ENCODE measurements at regions of chr5 and their contacts with region 1.

Region 1: DNA sequence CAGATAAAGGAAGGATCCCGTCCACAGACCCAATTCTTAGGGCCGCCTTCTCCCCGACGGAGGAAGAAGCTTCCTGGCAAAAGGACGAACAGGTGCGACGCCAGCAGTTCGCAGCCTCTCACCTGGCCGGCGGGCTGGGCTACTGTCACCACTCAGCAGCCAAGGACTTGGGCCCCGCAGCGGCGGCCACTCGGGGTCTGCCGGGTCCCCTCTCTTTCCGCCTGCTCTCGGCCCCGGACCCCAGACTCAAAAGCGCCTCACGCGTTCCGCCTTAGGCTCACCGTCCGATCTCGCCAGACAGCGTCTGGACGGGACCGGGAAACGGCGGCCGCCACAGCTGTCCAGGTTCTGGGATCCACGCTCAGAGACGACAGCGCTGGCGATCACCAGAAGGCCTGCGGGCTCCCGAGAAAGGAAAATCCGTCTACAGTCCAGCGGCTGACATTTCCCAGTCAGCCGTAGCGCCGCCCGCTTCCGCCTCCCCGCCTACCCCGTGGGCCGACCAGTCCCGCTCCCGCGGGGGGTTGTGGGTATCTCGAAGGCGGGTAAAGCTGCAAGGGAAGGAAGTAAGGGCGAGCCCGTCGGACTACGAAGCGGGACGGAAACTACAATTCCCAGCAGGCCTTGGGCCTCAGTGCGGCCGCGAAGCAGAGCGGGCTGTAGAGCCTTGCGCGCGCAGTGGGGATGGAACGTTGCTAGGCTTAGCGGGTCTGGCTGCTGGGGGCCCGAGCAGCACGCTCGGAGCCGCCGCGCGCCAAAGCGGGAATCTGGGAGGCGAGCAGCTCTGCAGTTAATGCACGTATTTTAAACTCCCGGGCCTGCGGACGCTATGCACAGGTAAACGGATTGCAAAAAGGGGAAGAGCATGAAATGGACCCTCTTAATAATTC is at the starts of genes LMBRD2 and SKP2:
- DNase-seq: peak; percentile 88 to 99 (median 96)
- ATAC-seq: peak; percentile 100
- H3K4me3 ChIP-seq: peak within 1 kb of the TSS; percentile 87
- H3K4me3 Mint-ChIP-seq: peak within 1 kb of the TSS; percentile 89 to 98 (median 96)
- H3K27ac ChIP-seq: peak within 1 kb of the TSS; percentile 85
- H3K27ac Mint-ChIP-seq: peak within 1 kb of the TSS; percentile 76 to 97 (median 91)
- H3K4me1 ChIP-seq: peaks cover 24% of the 10 kb centered on the region in 2 donors
- H3K4me1 Mint-ChIP-seq: peaks cover 48 to 92% (median 77%) of the 10 kb centered on the region in 7 donors
- H3K27me3 ChIP-seq: no peaks in the 10 kb centered on the region
- H3K27me3 Mint-ChIP-seq: no peaks in the 10 kb centered on the region
- total RNA-seq, gene LMBRD2: 6.8 to 17.1 (median 12.3) TPM
- total RNA-seq, gene SKP2: 11.9 to 37.1 (median 23.3) TPM

Region 2: GRCh38 chr5:34838785-34839714 is 1312.6 kb before region 1 on chr5 and contains the start of gene TTC23L:
- CTCF ChIA-PET with region 1: no interaction called
- POLR2A ChIA-PET with region 1: no interaction called
- intact Hi-C with region 1: loop called (anchors 1 to 5 kb)
- DNase-seq: peak; percentile 82 to 95 (median 90)
- ATAC-seq: peak; percentile 94
- H3K4me3 ChIP-seq: peak within 1 kb of the TSS; percentile 85
- H3K4me3 Mint-ChIP-seq: peak within 1 kb of the TSS; percentile 79 to 97 (median 92)
- H3K27ac ChIP-seq: peak within 1 kb of the TSS; percentile 78
- H3K27ac Mint-ChIP-seq: peak within 1 kb of the TSS; percentile 83 to 99 (median 94)
- H3K4me1 ChIP-seq: peaks cover 0 to 4% of the 10 kb centered on the region in 2 donors
- H3K4me1 Mint-ChIP-seq: peaks cover 6 to 16% (median 10%) of the 10 kb centered on the region in 7 donors
- H3K27me3 ChIP-seq: no peaks in the 10 kb centered on the region
- H3K27me3 Mint-ChIP-seq: peaks cover 0 to 9% (median 0%) of the 10 kb centered on the region in 5 donors
- total RNA-seq, gene TTC23L: 0.57 to 1.9 (median 1.00) TPM in 3 of 5 experiments, not detected in the others

Region 3: DNA sequence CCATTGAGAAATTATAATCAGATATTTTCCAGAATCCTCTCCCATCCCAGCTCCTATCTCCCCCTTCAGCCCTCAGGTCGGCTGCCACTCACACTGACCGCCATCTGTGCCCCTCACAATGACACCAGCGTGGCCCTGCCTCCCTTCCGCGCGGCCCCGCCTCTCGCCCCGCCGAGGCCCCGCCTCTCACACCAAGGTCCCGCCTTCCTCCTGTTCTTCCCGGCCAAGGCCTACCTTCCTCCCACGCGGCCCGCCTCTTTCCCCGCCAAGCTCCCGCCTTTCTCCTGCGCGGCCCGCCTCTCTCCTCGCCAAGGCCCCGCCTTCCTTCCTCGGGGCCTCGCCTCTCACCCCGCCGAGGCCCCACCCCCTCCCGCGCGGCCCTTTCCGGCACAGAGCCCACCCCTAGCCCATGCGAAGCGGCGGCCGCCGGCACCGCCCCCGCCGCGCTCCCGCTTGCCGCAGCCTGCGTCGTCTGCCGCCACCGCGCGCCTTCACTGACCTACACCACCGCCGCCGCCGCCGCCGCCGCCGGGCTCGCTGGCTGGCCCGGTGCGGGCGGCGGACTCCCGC is 1222.4 kb before region 1 on chr5 and contains the start of gene DNAJC21:
- CTCF ChIA-PET with region 1: no interaction called
- POLR2A ChIA-PET with region 1: no interaction called
- intact Hi-C with region 1: loop called (anchors 1 kb)
- DNase-seq: peak; percentile 93 to 99 (median 97)
- ATAC-seq: peak; percentile 93
- H3K4me3 ChIP-seq: peak within 1 kb of the TSS; percentile 75
- H3K4me3 Mint-ChIP-seq: peak within 1 kb of the TSS; percentile 94 to 99 (median 96)
- H3K27ac ChIP-seq: peak within 1 kb of the TSS; percentile 93
- H3K27ac Mint-ChIP-seq: peak within 1 kb of the TSS; percentile 86 to 98 (median 94)
- H3K4me1 ChIP-seq: peaks cover 15 to 18% of the 10 kb centered on the region in 2 donors
- H3K4me1 Mint-ChIP-seq: peaks cover 19 to 44% (median 36%) of the 10 kb centered on the region in 7 donors
- H3K27me3 ChIP-seq: no peaks in the 10 kb centered on the region
- H3K27me3 Mint-ChIP-seq: no peaks in the 10 kb centered on the region
- total RNA-seq, gene DNAJC21: 43.9 to 66.4 (median 49.6) TPM

Region 4: DNA sequence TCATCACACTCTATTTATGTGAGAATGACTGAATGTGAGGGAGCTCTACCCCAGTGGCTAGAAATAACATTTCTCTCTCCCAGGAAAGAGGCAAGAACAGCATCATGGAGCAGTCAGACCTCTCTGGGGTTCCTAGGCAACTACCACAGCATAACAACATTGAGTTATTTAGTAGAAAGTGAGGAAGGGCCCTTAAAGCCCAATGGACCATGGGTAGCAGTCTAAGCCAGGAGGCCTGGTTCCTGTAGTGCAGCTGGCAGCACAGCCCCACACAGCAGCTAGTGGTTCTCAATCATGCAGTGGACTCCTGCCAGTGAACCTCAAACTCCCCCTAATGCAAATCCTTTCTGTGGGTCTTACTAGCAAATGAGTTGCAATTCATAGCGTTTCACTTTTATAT is 478.7 kb before region 1 on chr5:
- CTCF ChIA-PET with region 1: no interaction called
- POLR2A ChIA-PET with region 1: no interaction called
- intact Hi-C with region 1: loop called in 1 of 2 experiments (anchors 5 kb)
- DNase-seq: peak in 8 of 9 donors; percentile 30 to 68 (median 52)
- ATAC-seq: peak; percentile 88
- H3K4me3 ChIP-seq: peak overlapping the region; percentile 14
- H3K4me3 Mint-ChIP-seq: peak overlapping the region in 9 of 10 donors; percentile 47 to 81 (median 66)
- H3K27ac ChIP-seq: peak overlapping the region; percentile 62
- H3K27ac Mint-ChIP-seq: peak overlapping the region; percentile 87 to 96 (median 92)
- H3K4me1 ChIP-seq: peaks cover 36 to 41% of the 10 kb centered on the region in 2 donors
- H3K4me1 Mint-ChIP-seq: peaks cover 20 to 88% (median 75%) of the 10 kb centered on the region in 7 donors
- H3K27me3 ChIP-seq: no peaks in the 10 kb centered on the region
- H3K27me3 Mint-ChIP-seq: no peaks in the 10 kb centered on the region

Region 5: GRCh38 chr5:36079200-36079761 is 72.4 kb before region 1 on chr5:
- CTCF ChIA-PET with region 1: no interaction called
- POLR2A ChIA-PET with region 1: no interaction called
- intact Hi-C with region 1: loop called in 1 of 2 experiments (anchors 1 kb)
- DNase-seq: peak in 6 of 9 donors; percentile 14 to 36 (median 29)
- ATAC-seq: peak; percentile 82
- H3K4me3 ChIP-seq: no peak overlapping the region
- H3K4me3 Mint-ChIP-seq: no peak overlapping the region
- H3K27ac ChIP-seq: no peak overlapping the region
- H3K27ac Mint-ChIP-seq: no peak overlapping the region
- H3K4me1 ChIP-seq: no peaks in the 10 kb centered on the region
- H3K4me1 Mint-ChIP-seq: no peaks in the 10 kb centered on the region
- H3K27me3 ChIP-seq: no peaks in the 10 kb centered on the region
- H3K27me3 Mint-ChIP-seq: peaks cover 17 to 51% (median 27%) of the 10 kb centered on the region in 5 donors

Region 6: GRCh38 chr5:36241631-36242533 is 90.2 kb after region 1 on chr5 and contains the start of gene NADK2:
- CTCF ChIA-PET with region 1: no interaction called
- POLR2A ChIA-PET with region 1: interaction called, 35 read pairs
- intact Hi-C with region 1: loop called (anchors 1 kb)
- DNase-seq: peak; percentile 88 to 96 (median 93)
- ATAC-seq: peak; percentile 92
- H3K4me3 ChIP-seq: peak within 1 kb of the TSS; percentile 78
- H3K4me3 Mint-ChIP-seq: peak within 1 kb of the TSS; percentile 84 to 95 (median 92)
- H3K27ac ChIP-seq: peak within 1 kb of the TSS; percentile 97
- H3K27ac Mint-ChIP-seq: peak within 1 kb of the TSS; percentile 94 to 97 (median 95)
- H3K4me1 ChIP-seq: peaks cover 12 to 14% of the 10 kb centered on the region in 2 donors
- H3K4me1 Mint-ChIP-seq: peaks cover 24 to 64% (median 52%) of the 10 kb centered on the region in 7 donors
- H3K27me3 ChIP-seq: no peaks in the 10 kb centered on the region
- H3K27me3 Mint-ChIP-seq: peaks cover 0 to 5% (median 0%) of the 10 kb centered on the region in 5 donors
- total RNA-seq, gene NADK2: 11.3 to 17.8 (median 13.0) TPM

Region 7: DNA sequence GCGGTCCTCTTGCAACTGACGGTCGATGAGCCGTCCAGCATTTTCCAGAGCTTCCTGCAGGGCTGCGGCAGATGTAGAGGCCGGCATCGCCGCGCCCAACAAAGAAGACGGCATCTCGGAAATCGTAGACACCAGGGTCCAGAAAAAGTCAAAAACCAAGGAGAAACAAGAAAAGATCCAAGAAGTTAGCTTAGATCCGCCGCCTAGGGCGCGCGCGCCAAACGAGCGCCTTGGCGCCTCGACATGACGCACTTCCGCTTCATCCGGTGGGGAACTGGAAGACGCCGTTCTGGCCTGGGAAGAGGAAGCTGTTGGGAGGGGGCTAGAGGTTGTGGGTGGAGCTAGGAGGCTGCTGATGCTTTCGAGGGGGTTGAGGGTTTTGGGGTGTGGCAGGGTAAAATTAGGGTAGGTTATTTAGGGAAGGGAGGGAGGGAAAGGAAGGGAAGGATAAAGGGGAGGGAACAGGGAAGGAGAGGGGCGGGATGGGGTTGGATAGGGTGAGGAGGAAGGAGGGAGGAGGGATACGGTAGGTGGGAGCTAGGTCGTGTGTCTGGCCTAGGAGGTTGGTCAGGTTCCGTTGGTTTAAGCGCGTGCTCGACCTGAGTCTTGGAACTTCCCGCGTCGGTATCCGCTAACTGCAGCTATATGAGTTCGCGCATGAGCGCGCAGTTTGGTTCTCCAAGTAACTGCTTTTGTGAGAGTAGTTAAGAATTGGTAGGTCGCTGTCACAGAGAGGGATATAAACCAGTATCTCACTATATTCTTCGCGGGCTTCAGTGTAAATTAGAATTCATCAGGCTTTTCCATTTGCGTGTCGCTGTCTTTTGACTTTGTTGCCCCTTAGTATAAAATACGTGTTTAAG is 1219.4 kb after region 1 on chr5 and contains the start of gene NUP155:
- CTCF ChIA-PET with region 1: no interaction called
- POLR2A ChIA-PET with region 1: no interaction called
- intact Hi-C with region 1: loop called (anchors 1 to 5 kb)
- DNase-seq: peak; percentile 64 to 92 (median 87)
- ATAC-seq: peak; percentile 97
- H3K4me3 ChIP-seq: peak within 1 kb of the TSS; percentile 95
- H3K4me3 Mint-ChIP-seq: peak within 1 kb of the TSS; percentile 92 to 99 (median 94)
- H3K27ac ChIP-seq: peak within 1 kb of the TSS; percentile 89
- H3K27ac Mint-ChIP-seq: peak within 1 kb of the TSS; percentile 87 to 98 (median 96)
- H3K4me1 ChIP-seq: peaks cover 21 to 22% of the 10 kb centered on the region in 2 donors
- H3K4me1 Mint-ChIP-seq: peaks cover 27 to 48% (median 36%) of the 10 kb centered on the region in 7 donors
- H3K27me3 ChIP-seq: no peaks in the 10 kb centered on the region
- H3K27me3 Mint-ChIP-seq: no peaks in the 10 kb centered on the region
- total RNA-seq, gene NUP155: 21.3 to 51.2 (median 26.4) TPM